ENCODE measurements at regions of chr2 and their contacts with region 1.

Region 1: GRCh38 chr2:118088051-118089024 is at the start of gene INSIG2:
- DNase-seq: peak; percentile 73
- H3K4me3 ChIP-seq: peak within 1 kb of the TSS; percentile 92
- CTCF ChIP-seq: peak; percentile 8

Region 2: DNA sequence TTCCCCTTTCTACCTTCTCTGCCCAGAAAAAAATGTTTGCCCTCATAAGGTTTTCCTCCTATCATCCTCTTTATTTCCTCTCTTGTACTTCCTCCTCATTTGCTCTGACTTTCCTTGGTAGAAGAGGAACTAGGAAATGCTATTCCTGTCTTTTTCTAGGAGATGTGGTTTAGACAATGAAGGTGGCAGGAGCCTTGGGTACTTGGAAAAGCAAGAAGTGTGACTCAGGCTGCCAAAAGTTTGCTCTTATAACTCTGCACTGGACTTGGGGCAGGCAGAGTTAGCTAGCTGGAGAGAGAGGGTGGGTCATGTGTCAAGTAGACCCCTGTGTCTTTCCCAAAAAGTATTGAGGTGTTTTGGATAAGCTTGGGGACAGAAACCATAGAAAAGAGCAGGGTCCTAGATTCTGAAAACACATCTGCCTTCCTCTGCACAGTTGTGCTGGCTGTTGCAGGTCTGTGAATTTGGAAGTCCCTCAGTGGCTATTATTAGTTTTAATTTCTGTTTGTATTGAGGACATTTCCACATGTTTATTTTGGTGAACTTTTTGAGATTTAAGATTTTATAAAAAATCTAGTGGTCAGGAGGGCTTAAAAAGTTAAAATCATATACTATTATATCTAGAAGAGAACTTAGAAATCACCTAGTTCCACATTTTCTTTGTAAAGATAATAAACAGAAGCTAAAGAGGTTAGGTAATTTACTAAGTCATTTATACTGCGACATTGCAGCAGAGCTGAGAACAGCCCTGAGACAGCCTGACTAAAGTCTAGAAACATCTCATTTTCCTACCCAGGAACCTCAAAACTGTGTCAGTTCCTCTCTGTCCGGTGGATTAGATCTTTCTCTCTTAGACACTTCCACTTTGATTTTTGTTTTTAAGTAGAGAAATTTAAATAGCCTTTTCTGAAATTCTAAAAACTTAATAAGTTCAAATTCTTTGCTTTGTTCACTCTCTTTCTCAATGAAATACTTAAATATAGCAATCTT is 15.9 kb after region 1 on chr2:
- CTCF ChIA-PET with region 1: interaction called, 12 read pairs
- POLR2A ChIA-PET with region 1: no interaction called
- DNase-seq: no peak
- H3K4me3 ChIP-seq: no peak overlapping the region
- CTCF ChIP-seq: no peak